A673 (cell line): ENCODE measurements at regions of chr15 and their contacts with region 1.

Region 1: DNA sequence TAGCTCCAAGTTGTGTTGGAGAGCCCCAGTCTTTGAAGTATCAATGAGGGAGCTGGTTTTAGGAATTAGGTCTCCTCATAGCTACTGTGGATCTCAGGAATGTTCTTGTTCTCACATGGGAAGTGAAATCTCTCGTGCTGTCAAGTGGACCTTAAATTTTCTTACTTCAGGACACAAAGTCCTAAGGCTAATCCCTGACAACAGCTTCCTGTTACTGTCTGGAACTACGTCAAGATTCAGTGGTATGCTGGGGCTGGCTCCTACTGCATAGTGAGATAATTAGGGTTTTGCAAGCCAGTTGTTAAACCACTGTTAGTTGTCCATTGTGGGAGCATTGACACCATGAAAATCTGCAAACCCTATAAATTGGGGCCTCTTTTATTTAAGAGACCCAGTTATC is 22.8 kb downstream of the MESP1 start:
- DNase-seq: peak; percentile 66
- H3K4me3 ChIP-seq: no peak overlapping the region
- H3K27ac ChIP-seq: no peak overlapping the region
- H3K4me1 ChIP-seq: peaks cover 10% of the 10 kb centered on the region
- H3K27me3 ChIP-seq: no peaks in the 10 kb centered on the region
- CTCF ChIP-seq: no peak

Region 2: DNA sequence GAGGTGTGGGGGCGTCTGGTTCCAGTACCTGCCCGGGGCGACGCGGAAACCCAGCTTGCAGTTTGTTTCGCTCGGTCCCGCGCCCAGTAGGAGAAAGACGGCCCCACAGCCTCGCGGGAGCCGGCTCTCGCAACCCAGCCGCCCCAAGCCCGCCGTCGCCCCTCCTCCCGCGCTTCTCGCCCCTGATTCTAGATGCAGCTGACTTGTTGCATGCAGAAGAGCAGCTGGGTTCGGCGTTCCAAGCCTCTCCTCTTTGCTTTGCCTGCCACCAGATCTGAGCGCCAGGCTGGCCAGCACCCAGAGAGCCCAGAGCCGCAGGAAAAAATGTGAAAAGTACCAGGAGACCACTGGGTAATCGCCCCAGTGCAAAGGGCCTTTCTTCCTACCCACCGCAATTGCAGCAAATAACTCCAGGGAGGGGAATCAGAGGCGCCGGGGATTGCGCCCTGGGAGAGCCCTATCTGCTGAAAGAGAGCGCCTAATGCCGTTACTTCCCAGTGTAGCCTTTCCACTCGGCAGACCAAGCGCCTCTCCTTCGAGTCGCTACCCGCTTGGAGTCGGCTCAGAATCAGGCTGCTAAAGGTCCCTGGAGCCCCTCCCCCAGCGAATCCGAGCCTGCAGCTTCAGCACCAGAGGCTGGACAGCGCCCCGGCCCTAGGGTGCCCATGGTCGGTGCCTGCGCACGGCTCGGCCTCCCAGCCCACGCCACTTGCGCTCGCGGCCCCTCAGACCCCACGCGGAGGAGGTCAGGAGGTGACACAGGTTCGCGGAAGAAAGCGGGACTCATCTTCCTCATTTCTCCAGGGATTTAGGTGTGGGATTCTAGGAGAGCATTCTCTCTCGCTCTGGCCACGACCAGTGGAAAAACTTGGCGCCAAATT is 1122.8 kb before region 1 on chr15:
- CTCF ChIA-PET with region 1: no interaction called
- POLR2A ChIA-PET with region 1: interaction called, 12 read pairs
- intact Hi-C with region 1: no loop called
- DNase-seq: peak; percentile 63
- H3K4me3 ChIP-seq: no peak overlapping the region
- H3K27ac ChIP-seq: no peak overlapping the region
- H3K4me1 ChIP-seq: no peaks in the 10 kb centered on the region
- H3K27me3 ChIP-seq: peaks cover 84% of the 10 kb centered on the region
- CTCF ChIP-seq: no peak

Region 3: GRCh38 chr15:89566141-89566540 is 162.1 kb before region 1 on chr15:
- CTCF ChIA-PET with region 1: no interaction called
- POLR2A ChIA-PET with region 1: no interaction called
- intact Hi-C with region 1: no loop called
- DNase-seq: no peak
- H3K4me3 ChIP-seq: no peak overlapping the region
- H3K27ac ChIP-seq: no peak overlapping the region
- H3K4me1 ChIP-seq: no peaks in the 10 kb centered on the region
- H3K27me3 ChIP-seq: no peaks in the 10 kb centered on the region
- CTCF ChIP-seq: no peak

Region 4: GRCh38 chr15:89888214-89888804 is 160.1 kb after region 1 on chr15:
- CTCF ChIA-PET with region 1: no interaction called
- POLR2A ChIA-PET with region 1: interaction called, 15 read pairs
- intact Hi-C with region 1: no loop called
- DNase-seq: peak; percentile 48
- H3K4me3 ChIP-seq: no peak overlapping the region
- H3K27ac ChIP-seq: no peak overlapping the region
- H3K4me1 ChIP-seq: no peaks in the 10 kb centered on the region
- H3K27me3 ChIP-seq: no peaks in the 10 kb centered on the region
- CTCF ChIP-seq: peak; percentile 46; the same call in 1 of the 2 replicates